ENCODE measurements at regions of chr12 and their contacts with region 1.

Region 1: DNA sequence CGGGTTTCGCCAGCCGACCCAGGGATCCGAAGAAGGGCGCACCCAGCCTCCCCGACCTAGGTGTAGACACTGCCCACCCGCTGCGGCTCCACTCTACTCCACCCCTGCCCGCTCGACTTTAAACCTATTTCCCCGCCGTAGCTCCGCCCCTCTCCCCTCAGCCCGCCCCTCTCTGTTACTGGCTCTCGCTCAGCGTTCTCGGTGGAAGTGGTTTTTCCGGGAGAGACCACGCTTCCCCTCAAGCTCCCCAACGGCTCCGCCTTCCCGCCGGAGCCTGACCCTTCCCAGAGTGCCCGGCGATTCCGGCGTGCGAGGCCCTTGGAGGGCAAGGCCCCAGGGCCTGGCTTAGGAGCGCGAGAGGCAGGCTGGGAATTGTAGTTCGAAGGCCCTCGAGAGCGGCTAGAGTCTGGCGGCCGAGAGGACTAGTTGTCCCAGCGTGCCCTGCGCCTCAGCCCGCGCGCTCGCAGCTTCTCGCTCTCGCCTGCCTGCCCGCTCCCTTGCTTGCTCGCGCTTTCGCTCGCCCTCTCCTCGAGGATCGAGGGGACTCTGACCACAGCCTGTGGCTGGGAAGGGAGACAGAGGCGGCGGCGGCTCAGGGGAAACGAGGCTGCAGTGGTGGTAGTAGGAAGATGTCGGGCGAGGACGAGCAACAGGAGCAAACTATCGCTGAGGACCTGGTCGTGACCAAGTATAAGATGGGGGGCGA is at the start of gene PA2G4:
- DNase-seq: peak; percentile 99
- H3K4me3 Mint-ChIP-seq: peak within 1 kb of the TSS; percentile 100
- H3K27ac Mint-ChIP-seq: peak within 1 kb of the TSS; percentile 97
- H3K4me1 Mint-ChIP-seq: peaks cover 34% of the 10 kb centered on the region
- H3K27me3 Mint-ChIP-seq: no peaks in the 10 kb centered on the region
- total RNA-seq, gene PA2G4: 399 to 410 TPM

Region 2: GRCh38 chr12:54984658-54985376 is 1119.4 kb before region 1 on chr12 and contains the start of gene TESPA1:
- CTCF ChIA-PET with region 1: no interaction called
- POLR2A ChIA-PET with region 1: no interaction called
- intact Hi-C with region 1: loop called (anchors 10 kb)
- DNase-seq: peak; percentile 93
- H3K4me3 Mint-ChIP-seq: peak within 1 kb of the TSS; percentile 79
- H3K27ac Mint-ChIP-seq: peak within 1 kb of the TSS; percentile 90
- H3K4me1 Mint-ChIP-seq: peaks cover 68% of the 10 kb centered on the region
- H3K27me3 Mint-ChIP-seq: no peaks in the 10 kb centered on the region
- total RNA-seq, gene TESPA1: 73.9 to 74.8 TPM

Region 3: DNA sequence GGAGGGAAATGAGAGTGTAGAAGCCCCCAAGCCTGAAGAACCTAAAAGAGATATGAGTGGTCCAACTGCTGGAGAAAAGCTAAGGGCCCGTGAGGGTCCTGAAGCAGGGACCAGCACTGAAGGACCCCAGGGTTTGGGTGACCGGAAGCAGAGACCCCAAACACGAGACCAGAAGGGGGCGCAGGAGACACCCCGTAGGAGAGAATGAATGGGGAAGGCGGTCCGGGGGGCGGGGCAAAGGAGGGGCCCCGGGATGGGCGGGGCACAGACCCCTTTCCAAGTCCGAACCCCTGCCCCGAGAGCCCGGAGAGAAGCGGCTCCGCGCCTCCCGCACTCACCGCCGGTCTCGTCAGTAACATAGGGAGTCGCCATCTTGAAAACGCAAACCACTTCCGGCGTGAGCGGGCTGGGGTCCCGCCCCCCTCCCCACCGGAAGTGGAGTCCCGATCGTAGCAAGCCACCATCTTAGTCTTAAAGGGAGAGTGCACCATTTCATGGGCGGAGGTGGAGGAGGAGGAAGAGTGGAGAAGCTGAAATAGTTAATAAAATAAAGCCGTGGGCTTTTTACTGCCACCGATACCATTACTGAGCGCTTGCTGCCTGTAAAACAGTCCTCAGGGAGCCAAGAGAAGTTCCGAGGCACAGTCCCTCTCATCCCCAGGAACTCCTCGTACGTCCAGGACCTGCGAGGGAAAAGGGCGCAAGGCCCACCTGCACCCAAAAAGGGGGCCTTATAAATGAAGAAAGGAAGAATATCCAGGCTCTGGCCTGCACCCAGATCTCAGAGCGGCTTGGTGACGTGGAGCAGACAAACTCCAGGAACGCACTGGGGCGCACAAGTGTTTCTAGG is 177.3 kb before region 1 on chr12:
- CTCF ChIA-PET with region 1: interaction called, 4 read pairs
- POLR2A ChIA-PET with region 1: interaction called, 4 read pairs
- intact Hi-C with region 1: loop called (anchors 2 kb)
- DNase-seq: peak; percentile 96
- H3K4me3 Mint-ChIP-seq: peak overlapping the region; percentile 96
- H3K27ac Mint-ChIP-seq: peak overlapping the region; percentile 98
- H3K4me1 Mint-ChIP-seq: peaks cover 43% of the 10 kb centered on the region
- H3K27me3 Mint-ChIP-seq: no peaks in the 10 kb centered on the region

Region 4: GRCh38 chr12:55996715-55997534 is 107.3 kb before region 1 on chr12 and contains the start of gene SUOX:
- CTCF ChIA-PET with region 1: interaction called, 22 read pairs
- POLR2A ChIA-PET with region 1: no interaction called
- intact Hi-C with region 1: loop called (anchors 5 kb)
- DNase-seq: peak; percentile 61
- H3K4me3 Mint-ChIP-seq: peak within 1 kb of the TSS; percentile 60
- H3K27ac Mint-ChIP-seq: no peak within 1 kb of the TSS
- H3K4me1 Mint-ChIP-seq: peaks cover 19% of the 10 kb centered on the region
- H3K27me3 Mint-ChIP-seq: peaks cover 5% of the 10 kb centered on the region
- total RNA-seq, gene SUOX: 2.4 to 2.7 TPM

Region 5: GRCh38 chr12:56084958-56085543 is 19.2 kb before region 1 on chr12:
- CTCF ChIA-PET with region 1: interaction called, 22 read pairs
- POLR2A ChIA-PET with region 1: interaction called, 23 read pairs
- intact Hi-C with region 1: no loop called
- DNase-seq: peak; percentile 62
- H3K4me3 Mint-ChIP-seq: no peak overlapping the region
- H3K27ac Mint-ChIP-seq: no peak overlapping the region
- H3K4me1 Mint-ChIP-seq: peaks cover 5% of the 10 kb centered on the region
- H3K27me3 Mint-ChIP-seq: peaks cover 7% of the 10 kb centered on the region

Region 6: DNA sequence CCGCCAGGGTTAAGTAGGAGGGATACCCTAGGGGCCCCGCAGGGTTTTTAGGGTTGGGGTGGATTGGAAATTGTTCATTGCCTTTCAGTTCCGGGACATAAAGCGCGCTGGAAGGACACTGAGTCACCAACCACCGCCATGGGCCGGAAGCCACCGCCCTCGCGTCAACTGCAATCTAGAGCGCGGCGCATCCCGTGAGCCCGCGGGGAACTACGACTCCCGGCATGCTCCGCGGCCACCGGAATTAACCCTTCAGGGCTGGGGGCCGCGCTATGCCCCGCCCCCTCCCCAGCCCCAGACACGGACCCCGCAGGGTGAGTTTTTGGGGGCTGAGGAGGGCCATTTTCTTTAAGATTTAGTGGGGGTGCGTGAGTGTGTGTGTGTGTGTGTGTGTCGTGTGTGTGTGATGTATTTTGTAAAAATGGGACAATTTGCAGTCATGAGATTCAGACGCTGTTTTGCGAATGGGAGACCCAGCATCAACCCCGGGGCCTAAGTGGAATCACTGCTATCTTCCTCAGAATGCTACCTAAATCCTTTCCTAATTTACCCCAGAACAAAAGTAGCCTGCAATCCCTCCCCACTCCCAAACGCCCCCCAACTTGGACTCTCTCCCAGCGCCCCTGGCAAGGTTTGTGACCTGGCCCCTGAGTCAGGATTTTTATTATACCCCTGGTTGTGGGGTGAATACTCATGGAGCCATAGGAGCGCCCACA is 48.2 kb after region 1 on chr12 and contains the start of gene MYL6B:
- CTCF ChIA-PET with region 1: interaction called, 8 read pairs
- POLR2A ChIA-PET with region 1: interaction called, 5 read pairs
- intact Hi-C with region 1: loop called (anchors 1 kb)
- DNase-seq: peak; percentile 97
- H3K4me3 Mint-ChIP-seq: peak within 1 kb of the TSS; percentile 78
- H3K27ac Mint-ChIP-seq: peak within 1 kb of the TSS; percentile 96
- H3K4me1 Mint-ChIP-seq: peaks cover 34% of the 10 kb centered on the region
- H3K27me3 Mint-ChIP-seq: no peaks in the 10 kb centered on the region
- total RNA-seq, gene MYL6B: 63.8 to 70.8 TPM